IMR-90 (cell line): ENCODE measurements at regions of chr11 and their contacts with region 1.

Region 1: DNA sequence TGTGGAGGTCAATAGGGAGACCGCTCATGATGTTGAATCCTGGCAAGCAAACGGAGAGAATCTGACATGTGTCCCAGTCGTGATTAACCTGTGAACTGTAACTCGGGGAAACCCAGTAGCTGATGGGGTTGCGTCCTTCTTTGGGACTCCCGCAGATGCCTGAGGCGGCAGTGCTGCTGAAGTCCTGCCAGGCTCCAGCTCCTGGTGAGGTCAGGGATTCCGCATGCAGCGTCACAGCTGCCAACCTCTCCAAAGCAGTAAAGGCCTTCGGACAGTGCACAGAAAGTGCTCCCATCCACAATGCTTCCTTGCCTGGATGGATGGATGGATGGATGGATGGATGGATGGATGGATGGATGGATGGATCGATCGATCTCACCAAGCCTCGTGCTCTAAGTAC is 13.5 kb downstream of the KCNQ1 start:
- DNase-seq: no peak
- ATAC-seq: no peak
- H3K4me3 ChIP-seq: no peak overlapping the region
- H3K27ac ChIP-seq: no peak overlapping the region
- H3K4me1 ChIP-seq: no peaks in the 10 kb centered on the region
- H3K27me3 ChIP-seq: peaks cover 27% of the 10 kb centered on the region
- CTCF ChIP-seq: no peak
- POLR2A ChIP-seq: no peak
- RAD21 ChIP-seq: no peak

Region 2: GRCh38 chr11:1706634-1707400 is 751.5 kb before region 1 on chr11:
- CTCF ChIA-PET with region 1: interaction called, 11 read pairs
- POLR2A ChIA-PET with region 1: no interaction called
- dilution Hi-C with region 1: no loop called
- in situ Hi-C with region 1: no loop called
- intact Hi-C with region 1: no loop called
- DNase-seq: no peak
- ATAC-seq: no peak
- H3K4me3 ChIP-seq: no peak overlapping the region
- H3K27ac ChIP-seq: no peak overlapping the region
- H3K4me1 ChIP-seq: no peaks in the 10 kb centered on the region
- H3K27me3 ChIP-seq: peaks cover 47% of the 10 kb centered on the region
- CTCF ChIP-seq: 0 out of 2 replicates have a peak, but pooled peaks have one; percentile 12
- POLR2A ChIP-seq: no peak
- RAD21 ChIP-seq: no peak

Region 3: GRCh38 chr11:2586087-2586792 is 127.9 kb after region 1 on chr11:
- CTCF ChIA-PET with region 1: no interaction called
- POLR2A ChIA-PET with region 1: no interaction called
- dilution Hi-C with region 1: no loop called
- in situ Hi-C with region 1: no loop called
- intact Hi-C with region 1: no loop called
- DNase-seq: no peak
- ATAC-seq: no peak
- H3K4me3 ChIP-seq: no peak overlapping the region
- H3K27ac ChIP-seq: no peak overlapping the region
- H3K4me1 ChIP-seq: no peaks in the 10 kb centered on the region
- H3K27me3 ChIP-seq: peaks cover 22% of the 10 kb centered on the region; the same call in 1 of the 2 replicates
- CTCF ChIP-seq: no peak
- POLR2A ChIP-seq: no peak
- RAD21 ChIP-seq: no peak